Mammary epithelial cell (primary cell): ENCODE measurements at regions of chr1 and their contacts with region 1.

Region 1: DNA sequence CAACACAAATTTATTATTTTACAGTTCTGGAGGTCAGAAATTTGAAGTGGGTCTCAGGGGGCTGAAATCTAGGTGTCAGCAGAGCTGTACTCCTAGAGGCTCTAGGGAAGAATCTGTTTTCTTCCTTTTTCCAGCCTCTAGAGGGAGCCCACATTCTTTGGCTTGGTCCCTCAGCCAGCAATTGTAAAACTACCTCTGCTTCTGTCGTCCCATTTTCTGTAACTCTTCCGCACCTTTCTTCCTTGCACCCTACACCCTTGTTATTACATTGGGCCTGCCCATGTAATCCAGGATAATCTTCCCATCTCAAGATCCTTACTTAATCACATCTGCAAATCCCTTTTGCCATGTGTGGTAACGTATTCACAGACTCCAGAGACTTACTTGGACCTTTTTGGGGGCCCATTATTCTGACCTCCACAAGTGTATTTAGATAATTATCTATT is 24.8 kb upstream of the THEM4 start:
- DNase-seq: peak; percentile 57
- H3K4me3 ChIP-seq: no peak overlapping the region
- H3K27ac ChIP-seq: peak overlapping the region; percentile 4
- H3K4me1 ChIP-seq: no peaks in the 10 kb centered on the region
- H3K27me3 ChIP-seq: no peaks in the 10 kb centered on the region
- CTCF ChIP-seq: peak; percentile 85 to 95

Region 2: GRCh38 chr1:151281969-151282882 is 651.8 kb before region 1 on chr1 and contains the start of gene ZNF687:
- CTCF ChIA-PET with region 1: no interaction called
- dilution Hi-C with region 1: no loop called
- in situ Hi-C with region 1: no loop called
- intact Hi-C with region 1: no loop called
- DNase-seq: peak; percentile 100
- H3K4me3 ChIP-seq: peak within 1 kb of the TSS; percentile 75 to 86 (median 85)
- H3K27ac ChIP-seq: peak within 1 kb of the TSS; percentile 97
- H3K4me1 ChIP-seq: peaks cover 16% of the 10 kb centered on the region
- H3K27me3 ChIP-seq: no peaks in the 10 kb centered on the region
- CTCF ChIP-seq: no peak
- total RNA-seq, gene ZNF687: 17.7 to 23.3 TPM

Region 3: DNA sequence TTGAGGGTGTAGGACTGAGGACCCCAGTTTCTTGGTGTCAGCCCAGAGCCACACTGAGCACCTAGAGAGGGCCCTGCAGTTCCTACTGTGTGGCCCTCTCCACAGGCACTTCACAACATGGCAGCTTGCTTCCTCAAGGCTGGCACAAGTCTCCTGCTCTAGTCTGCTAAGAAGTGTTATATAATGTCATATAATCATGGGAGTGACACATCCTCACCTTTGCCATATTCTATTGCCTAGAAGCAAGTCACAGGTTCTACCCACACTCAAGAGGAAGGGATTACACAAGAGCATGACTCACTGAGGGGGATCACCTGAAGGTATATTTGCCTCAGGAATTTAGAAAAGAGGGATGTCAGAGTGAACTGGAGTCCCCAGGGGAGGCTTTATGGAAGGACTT is 327.7 kb before region 1 on chr1:
- CTCF ChIA-PET with region 1: no interaction called
- dilution Hi-C with region 1: no loop called
- in situ Hi-C with region 1: no loop called
- intact Hi-C with region 1: no loop called
- DNase-seq: peak; percentile 94
- H3K4me3 ChIP-seq: no peak overlapping the region
- H3K27ac ChIP-seq: no peak overlapping the region
- H3K4me1 ChIP-seq: peaks cover 23% of the 10 kb centered on the region
- H3K27me3 ChIP-seq: no peaks in the 10 kb centered on the region
- CTCF ChIP-seq: no peak

Region 4: GRCh38 chr1:151888972-151889570 is 45.0 kb before region 1 on chr1:
- CTCF ChIA-PET with region 1: no interaction called
- dilution Hi-C with region 1: no loop called
- in situ Hi-C with region 1: no loop called
- intact Hi-C with region 1: loop called (anchors 1 kb)
- DNase-seq: no peak
- H3K4me3 ChIP-seq: no peak overlapping the region
- H3K27ac ChIP-seq: no peak overlapping the region
- H3K4me1 ChIP-seq: peaks cover 30% of the 10 kb centered on the region
- H3K27me3 ChIP-seq: no peaks in the 10 kb centered on the region
- CTCF ChIP-seq: peak; percentile 15 to 49

Region 5: DNA sequence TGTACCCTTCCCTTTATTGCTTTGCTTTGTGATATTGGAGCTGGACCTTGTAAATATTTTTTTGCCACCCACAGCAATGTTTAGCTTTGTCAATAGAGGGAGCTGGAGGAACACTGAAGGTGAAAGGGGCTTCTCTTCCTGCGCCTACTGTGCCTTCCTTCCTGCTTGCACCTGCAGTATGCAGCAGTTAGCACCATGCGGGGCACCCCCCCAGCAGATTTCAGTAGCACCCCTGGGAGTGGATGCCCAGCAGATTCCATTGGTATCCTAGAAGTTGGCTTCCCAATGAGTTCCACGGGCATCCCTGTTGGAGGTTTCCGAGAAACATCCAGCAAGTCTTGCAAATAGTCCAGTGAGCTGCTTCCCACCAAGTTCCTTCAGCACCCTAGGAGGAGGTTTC is 34.0 kb after region 1 on chr1:
- CTCF ChIA-PET with region 1: no interaction called
- dilution Hi-C with region 1: no loop called
- in situ Hi-C with region 1: no loop called
- intact Hi-C with region 1: loop called (anchors 1 kb)
- DNase-seq: peak; percentile 52
- H3K4me3 ChIP-seq: no peak overlapping the region
- H3K27ac ChIP-seq: no peak overlapping the region
- H3K4me1 ChIP-seq: peaks cover 65% of the 10 kb centered on the region
- H3K27me3 ChIP-seq: no peaks in the 10 kb centered on the region
- CTCF ChIP-seq: peak; percentile 87 to 90

Region 6: GRCh38 chr1:152013664-152014237 is 79.7 kb after region 1 on chr1:
- CTCF ChIA-PET with region 1: no interaction called
- dilution Hi-C with region 1: no loop called
- in situ Hi-C with region 1: loop called in 1 of 2 experiments (anchors 10 kb)
- intact Hi-C with region 1: loop called (anchors 1 kb)
- DNase-seq: no peak
- H3K4me3 ChIP-seq: no peak overlapping the region
- H3K27ac ChIP-seq: no peak overlapping the region
- H3K4me1 ChIP-seq: peaks cover 25% of the 10 kb centered on the region
- H3K27me3 ChIP-seq: no peaks in the 10 kb centered on the region
- CTCF ChIP-seq: peak; percentile 82 to 86

Region 7: GRCh38 chr1:152034646-152035405 is 100.8 kb after region 1 on chr1:
- CTCF ChIA-PET with region 1: no interaction called
- dilution Hi-C with region 1: no loop called
- in situ Hi-C with region 1: no loop called
- intact Hi-C with region 1: loop called (anchors 1 kb)
- DNase-seq: peak; percentile 82
- H3K4me3 ChIP-seq: peak overlapping the region; percentile 90 to 99 (median 95)
- H3K27ac ChIP-seq: peak overlapping the region; percentile 95
- H3K4me1 ChIP-seq: peaks cover 23% of the 10 kb centered on the region
- H3K27me3 ChIP-seq: no peaks in the 10 kb centered on the region
- CTCF ChIP-seq: peak; percentile 71 to 81

Region 8: DNA sequence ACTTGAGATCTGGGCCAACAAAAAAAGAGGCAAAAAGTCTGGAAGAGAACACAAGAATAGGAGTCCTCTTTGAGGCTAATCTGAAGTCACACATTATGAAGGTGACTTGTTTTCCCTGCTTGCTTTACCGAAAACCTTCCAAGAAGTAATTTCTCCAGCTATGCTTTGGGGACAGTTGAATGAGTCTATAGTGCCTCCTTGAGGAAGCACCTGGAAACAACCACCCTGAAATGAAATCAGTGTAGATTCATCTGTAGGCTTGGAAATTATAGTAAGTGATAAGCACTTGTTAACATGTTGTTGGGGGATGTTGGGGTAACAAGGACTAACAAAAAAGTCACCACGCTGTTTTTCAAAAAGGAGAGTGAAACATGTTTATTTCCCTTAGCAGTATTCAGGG is 248.4 kb after region 1 on chr1:
- CTCF ChIA-PET with region 1: interaction called, 3 read pairs
- dilution Hi-C with region 1: loop called (anchors 10 kb)
- in situ Hi-C with region 1: no loop called
- intact Hi-C with region 1: loop called (anchors 1 kb)
- DNase-seq: no peak
- H3K4me3 ChIP-seq: no peak overlapping the region
- H3K27ac ChIP-seq: peak overlapping the region; percentile 72
- H3K4me1 ChIP-seq: peaks cover 59% of the 10 kb centered on the region
- H3K27me3 ChIP-seq: no peaks in the 10 kb centered on the region
- CTCF ChIP-seq: peak; percentile 84 to 87